HCT116 (cell line): ENCODE measurements at regions of chr5 and their contacts with region 1.

Region 1: GRCh38 chr5:36535378-36535777 is 71.0 kb upstream of the SLC1A3 start:
- DNase-seq: no peak
- ATAC-seq: no peak
- H3K4me3 ChIP-seq: no peak overlapping the region
- H3K27ac ChIP-seq: no peak overlapping the region
- H3K4me1 ChIP-seq: no peaks in the 10 kb centered on the region
- H3K27me3 ChIP-seq: no peaks in the 10 kb centered on the region
- CTCF ChIP-seq: no peak
- POLR2A ChIP-seq: no peak
- RAD21 ChIP-seq: no peak

Region 2: DNA sequence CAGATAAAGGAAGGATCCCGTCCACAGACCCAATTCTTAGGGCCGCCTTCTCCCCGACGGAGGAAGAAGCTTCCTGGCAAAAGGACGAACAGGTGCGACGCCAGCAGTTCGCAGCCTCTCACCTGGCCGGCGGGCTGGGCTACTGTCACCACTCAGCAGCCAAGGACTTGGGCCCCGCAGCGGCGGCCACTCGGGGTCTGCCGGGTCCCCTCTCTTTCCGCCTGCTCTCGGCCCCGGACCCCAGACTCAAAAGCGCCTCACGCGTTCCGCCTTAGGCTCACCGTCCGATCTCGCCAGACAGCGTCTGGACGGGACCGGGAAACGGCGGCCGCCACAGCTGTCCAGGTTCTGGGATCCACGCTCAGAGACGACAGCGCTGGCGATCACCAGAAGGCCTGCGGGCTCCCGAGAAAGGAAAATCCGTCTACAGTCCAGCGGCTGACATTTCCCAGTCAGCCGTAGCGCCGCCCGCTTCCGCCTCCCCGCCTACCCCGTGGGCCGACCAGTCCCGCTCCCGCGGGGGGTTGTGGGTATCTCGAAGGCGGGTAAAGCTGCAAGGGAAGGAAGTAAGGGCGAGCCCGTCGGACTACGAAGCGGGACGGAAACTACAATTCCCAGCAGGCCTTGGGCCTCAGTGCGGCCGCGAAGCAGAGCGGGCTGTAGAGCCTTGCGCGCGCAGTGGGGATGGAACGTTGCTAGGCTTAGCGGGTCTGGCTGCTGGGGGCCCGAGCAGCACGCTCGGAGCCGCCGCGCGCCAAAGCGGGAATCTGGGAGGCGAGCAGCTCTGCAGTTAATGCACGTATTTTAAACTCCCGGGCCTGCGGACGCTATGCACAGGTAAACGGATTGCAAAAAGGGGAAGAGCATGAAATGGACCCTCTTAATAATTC is 383.7 kb before region 1 on chr5 and contains the starts of genes LMBRD2 and SKP2:
- CTCF ChIA-PET with region 1: no interaction called
- POLR2A ChIA-PET with region 1: no interaction called
- RAD21 ChIA-PET with region 1: no interaction called
- intact Hi-C with region 1: no loop called
- DNase-seq: peak; percentile 92
- ATAC-seq: peak; percentile 98
- H3K4me3 ChIP-seq: peak within 1 kb of the TSS; percentile 73 to 81
- H3K27ac ChIP-seq: peak within 1 kb of the TSS; percentile 27
- H3K4me1 ChIP-seq: peaks cover 6 to 12% of the 10 kb centered on the region in 2 experiments; a peak in 3 of 4 replicates
- H3K27me3 ChIP-seq: no peaks in the 10 kb centered on the region
- CTCF ChIP-seq: no peak
- POLR2A ChIP-seq: peak; percentile 89
- RAD21 ChIP-seq: no peak
- total RNA-seq, gene LMBRD2: 1.1 TPM
- total RNA-seq, gene SKP2: 44.3 TPM

Region 3: DNA sequence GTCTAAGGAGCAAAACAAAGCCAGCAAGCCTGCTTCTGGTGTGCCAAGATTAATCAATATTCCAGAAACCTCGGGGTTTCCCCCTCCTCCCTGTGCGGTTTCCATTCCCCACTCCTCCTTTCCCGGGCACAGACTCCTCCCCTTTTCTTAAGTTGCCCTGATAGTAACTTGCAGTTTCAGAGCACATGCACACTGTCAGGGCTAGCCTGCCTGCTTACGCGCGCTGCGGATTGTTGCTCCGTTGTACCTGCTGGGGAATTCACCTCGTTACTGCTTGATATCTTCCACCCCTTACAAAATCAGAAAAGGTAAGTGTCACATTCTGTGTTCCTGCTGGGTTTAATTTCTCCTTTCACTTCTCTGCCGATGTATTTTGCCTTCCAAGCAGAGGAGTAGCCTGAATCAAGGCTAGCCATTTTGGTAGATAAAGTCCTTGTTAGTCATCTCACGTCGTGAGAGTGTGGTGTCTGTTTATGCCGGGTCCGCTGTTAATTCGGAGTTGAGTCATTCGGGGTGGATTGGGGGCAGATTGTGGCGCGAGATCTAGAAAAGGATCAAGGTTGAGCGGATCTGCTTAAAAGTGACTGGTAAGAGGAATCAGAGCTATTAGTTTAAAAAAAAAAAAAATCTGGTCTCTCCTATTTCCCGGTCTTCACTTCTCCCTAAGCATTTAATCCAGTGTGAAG is 71.2 kb after region 1 on chr5 and contains the start of gene SLC1A3:
- CTCF ChIA-PET with region 1: no interaction called
- POLR2A ChIA-PET with region 1: no interaction called
- RAD21 ChIA-PET with region 1: no interaction called
- intact Hi-C with region 1: no loop called
- DNase-seq: peak; percentile 74
- ATAC-seq: peak; percentile 93
- H3K4me3 ChIP-seq: peak within 1 kb of the TSS; percentile 69
- H3K27ac ChIP-seq: peak within 1 kb of the TSS; percentile 67
- H3K4me1 ChIP-seq: peaks cover 8 to 27% of the 10 kb centered on the region in 2 experiments; a peak in 3 of 4 replicates
- H3K27me3 ChIP-seq: peaks cover 3% of the 10 kb centered on the region; the same call in 1 of the 2 replicates
- CTCF ChIP-seq: no peak
- POLR2A ChIP-seq: peak; percentile 85
- RAD21 ChIP-seq: no peak
- total RNA-seq, gene SLC1A3: 12.9 TPM

Region 4: GRCh38 chr5:36655161-36655560 is 119.8 kb after region 1 on chr5:
- CTCF ChIA-PET with region 1: no interaction called
- POLR2A ChIA-PET with region 1: no interaction called
- RAD21 ChIA-PET with region 1: no interaction called
- intact Hi-C with region 1: no loop called
- DNase-seq: no peak
- ATAC-seq: no peak
- H3K4me3 ChIP-seq: no peak overlapping the region
- H3K27ac ChIP-seq: no peak overlapping the region; the same call in 1 of the 2 replicates
- H3K4me1 ChIP-seq: peaks cover 27 to 55% of the 10 kb centered on the region in 2 experiments
- H3K27me3 ChIP-seq: no peaks in the 10 kb centered on the region
- CTCF ChIP-seq: no peak
- POLR2A ChIP-seq: no peak
- RAD21 ChIP-seq: no peak

Region 5: DNA sequence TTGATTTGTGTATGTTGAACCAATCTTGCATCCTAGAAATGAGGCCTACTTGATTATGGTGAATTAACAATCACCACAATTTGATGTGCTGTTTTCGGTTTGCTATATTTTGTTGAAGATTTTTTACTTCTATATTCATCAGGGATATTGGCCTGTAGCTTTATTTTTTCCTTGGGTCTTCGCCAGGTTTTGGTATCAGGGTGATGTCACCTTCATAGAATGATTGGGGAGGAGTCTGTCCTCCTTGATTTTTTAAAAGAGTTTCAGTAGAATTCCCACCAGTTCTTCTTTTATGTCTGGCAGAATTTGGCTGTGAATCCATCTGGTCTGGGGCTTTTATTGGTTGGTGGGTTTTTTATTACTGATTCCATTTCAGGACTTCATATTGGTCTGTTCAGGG is 598.6 kb after region 1 on chr5:
- CTCF ChIA-PET with region 1: no interaction called
- POLR2A ChIA-PET with region 1: no interaction called
- RAD21 ChIA-PET with region 1: no interaction called
- intact Hi-C with region 1: loop called (anchors 5 kb)
- DNase-seq: no peak
- ATAC-seq: no peak
- H3K4me3 ChIP-seq: no peak overlapping the region
- H3K27ac ChIP-seq: no peak overlapping the region
- H3K4me1 ChIP-seq: peaks cover 0 to 6% of the 10 kb centered on the region in 2 experiments; a peak in 1 of 4 replicates
- H3K27me3 ChIP-seq: no peaks in the 10 kb centered on the region
- CTCF ChIP-seq: no peak
- POLR2A ChIP-seq: no peak
- RAD21 ChIP-seq: no peak